ENCODE measurements at regions of chr6 and their contacts with region 1.

Region 1: GRCh38 chr6:42224222-42224989 is 6.7 kb upstream of the MRPS10 start:
- DNase-seq: peak; percentile 98
- ATAC-seq: peak; percentile 74
- H3K4me3 ChIP-seq: peak overlapping the region in 1 of 2 experiments; percentile 23; a peak in 2 of 4 replicates
- H3K27ac ChIP-seq: peak overlapping the region; percentile 100
- H3K4me1 ChIP-seq: peaks cover 87% of the 10 kb centered on the region
- H3K27me3 ChIP-seq: no peaks in the 10 kb centered on the region
- CTCF ChIP-seq: no peak

Region 2: GRCh38 chr6:42251911-42252637 is 27.7 kb after region 1 on chr6:
- CTCF ChIA-PET with region 1: no interaction called
- POLR2A ChIA-PET with region 1: interaction called, 11 read pairs
- in situ Hi-C with region 1: no loop called
- intact Hi-C with region 1: no loop called
- DNase-seq: no peak
- ATAC-seq: peak; percentile 50; the same call in 1 of the 2 replicates
- H3K4me3 ChIP-seq: no peak overlapping the region
- H3K27ac ChIP-seq: peak overlapping the region; percentile 44; the same call in 1 of the 2 replicates
- H3K4me1 ChIP-seq: peaks cover 10% of the 10 kb centered on the region
- H3K27me3 ChIP-seq: no peaks in the 10 kb centered on the region
- CTCF ChIP-seq: no peak

Region 3: GRCh38 chr6:42269553-42269952 is 45.1 kb after region 1 on chr6:
- CTCF ChIA-PET with region 1: interaction called, 12 read pairs
- POLR2A ChIA-PET with region 1: no interaction called
- in situ Hi-C with region 1: no loop called
- intact Hi-C with region 1: no loop called
- DNase-seq: no peak
- ATAC-seq: no peak
- H3K4me3 ChIP-seq: no peak overlapping the region
- H3K27ac ChIP-seq: no peak overlapping the region
- H3K4me1 ChIP-seq: no peaks in the 10 kb centered on the region
- H3K27me3 ChIP-seq: no peaks in the 10 kb centered on the region
- CTCF ChIP-seq: no peak

Region 4: GRCh38 chr6:42367353-42368011 is 143.1 kb after region 1 on chr6:
- CTCF ChIA-PET with region 1: no interaction called
- POLR2A ChIA-PET with region 1: no interaction called
- in situ Hi-C with region 1: no loop called
- intact Hi-C with region 1: no loop called
- DNase-seq: no peak
- ATAC-seq: no peak
- H3K4me3 ChIP-seq: no peak overlapping the region
- H3K27ac ChIP-seq: peak overlapping the region; percentile 53
- H3K4me1 ChIP-seq: peaks cover 25% of the 10 kb centered on the region
- H3K27me3 ChIP-seq: no peaks in the 10 kb centered on the region
- CTCF ChIP-seq: no peak

Region 5: GRCh38 chr6:42390228-42390934 is 166.0 kb after region 1 on chr6:
- CTCF ChIA-PET with region 1: no interaction called
- POLR2A ChIA-PET with region 1: no interaction called
- in situ Hi-C with region 1: no loop called
- intact Hi-C with region 1: no loop called
- DNase-seq: no peak
- ATAC-seq: no peak
- H3K4me3 ChIP-seq: no peak overlapping the region
- H3K27ac ChIP-seq: 0 out of 2 replicates have a peak overlapping the region, but pooled peaks have one; percentile 10
- H3K4me1 ChIP-seq: peaks cover 27% of the 10 kb centered on the region
- H3K27me3 ChIP-seq: no peaks in the 10 kb centered on the region
- CTCF ChIP-seq: no peak

Measured in Panc1 (cell line).